Left ventricle myocardium superior (tissue), 1 donor: ENCODE measurements at regions of chr18 and their contacts with region 1.

Region 1: GRCh38 chr18:24878289-24878688 is 417.9 kb downstream of the HRH4 start:
- DNase-seq: no peak
- ATAC-seq: peak; percentile 65

Region 2: DNA sequence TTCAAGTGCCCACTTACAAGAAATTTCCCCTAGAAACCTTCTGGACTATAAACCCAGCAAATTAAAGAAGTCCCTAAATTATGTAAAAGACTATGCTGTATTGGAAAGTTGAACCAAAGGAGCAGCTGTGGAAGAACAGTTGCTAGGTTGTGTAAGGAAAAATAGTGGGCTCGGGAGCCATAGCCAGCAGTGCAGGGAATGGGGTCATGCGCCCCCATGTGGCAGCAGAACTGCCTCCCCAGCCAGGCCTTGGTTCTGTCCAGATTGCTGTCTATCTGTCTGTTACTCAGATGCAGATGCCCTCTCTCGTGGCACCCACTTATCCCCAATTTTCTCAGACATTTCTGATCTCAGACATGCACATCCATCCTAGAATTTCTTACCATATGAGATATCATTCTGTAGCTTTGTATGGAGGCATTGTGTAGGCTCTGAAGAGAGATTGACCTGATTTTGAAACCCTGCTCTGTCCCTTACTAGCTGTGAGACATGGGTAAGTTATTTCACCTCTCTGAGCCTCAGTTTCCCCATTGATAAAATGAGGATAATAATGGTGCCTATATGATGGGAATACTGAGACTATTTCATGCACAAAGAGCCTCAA is 953.8 kb after region 1 on chr18:
- intact Hi-C with region 1: loop called (anchors 10 kb)
- DNase-seq: peak; percentile 84
- ATAC-seq: peak; percentile 92

Region 3: DNA sequence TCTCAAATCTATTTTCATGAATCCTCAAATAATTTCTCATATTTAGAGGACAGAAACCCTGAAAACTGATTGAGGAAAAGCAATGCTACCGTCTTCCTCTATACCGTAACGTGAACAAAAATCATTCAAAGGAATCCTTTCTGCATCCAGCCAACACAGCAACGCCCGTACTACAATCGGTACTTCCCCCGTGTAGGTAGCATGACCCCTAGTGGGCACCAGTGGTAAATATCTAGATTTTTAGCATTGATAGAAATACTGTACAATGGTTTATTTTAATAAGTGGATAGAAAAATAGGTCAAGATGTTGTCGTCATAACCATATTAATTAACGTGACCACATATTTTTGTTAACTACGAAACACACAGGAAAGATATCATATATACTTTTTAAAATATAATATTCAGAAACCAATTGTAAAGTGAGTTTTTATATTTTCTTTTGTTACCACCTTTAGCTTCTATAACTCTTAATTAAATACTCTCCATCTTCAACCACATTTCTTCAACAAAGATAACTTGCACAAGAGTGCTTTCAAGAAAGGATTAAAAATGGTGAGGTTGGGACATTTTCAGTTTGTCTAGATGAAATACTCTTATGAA is 1018.0 kb after region 1 on chr18:
- intact Hi-C with region 1: loop called (anchors 10 kb)
- DNase-seq: no peak
- ATAC-seq: peak; percentile 26